Adrenal gland (tissue), 19 donors: ENCODE measurements at regions of chr4 and their contacts with region 1.

Region 1: GRCh38 chr4:39044364-39044955 is 12.3 kb upstream of the TMEM156 start:
- DNase-seq: peak; percentile 92 to 97 (median 96)
- H3K4me3 ChIP-seq: peak overlapping the region in 3 of 4 donors; percentile 51 to 97 (median 71)
- H3K27ac ChIP-seq: peak overlapping the region; percentile 59 to 99 (median 93)
- H3K4me1 ChIP-seq: peaks cover 16 to 43% of the 10 kb centered on the region in 2 donors
- H3K27me3 ChIP-seq: no peaks in the 10 kb centered on the region
- CTCF ChIP-seq: no peak
- POLR2A ChIP-seq: peak in 1 of 2 donors; percentile 9

Region 2: GRCh38 chr4:38914854-38915253 is 129.6 kb before region 1 on chr4:
- intact Hi-C with region 1: loop called in 1 of 2 experiments (anchors 10 kb)
- DNase-seq: no peak
- H3K4me3 ChIP-seq: no peak overlapping the region
- H3K27ac ChIP-seq: peak overlapping the region in 1 of 5 donors; percentile 1
- H3K4me1 ChIP-seq: peaks cover 0 to 15% of the 10 kb centered on the region in 2 donors
- H3K27me3 ChIP-seq: no peaks in the 10 kb centered on the region
- CTCF ChIP-seq: no peak
- POLR2A ChIP-seq: no peak

Region 3: DNA sequence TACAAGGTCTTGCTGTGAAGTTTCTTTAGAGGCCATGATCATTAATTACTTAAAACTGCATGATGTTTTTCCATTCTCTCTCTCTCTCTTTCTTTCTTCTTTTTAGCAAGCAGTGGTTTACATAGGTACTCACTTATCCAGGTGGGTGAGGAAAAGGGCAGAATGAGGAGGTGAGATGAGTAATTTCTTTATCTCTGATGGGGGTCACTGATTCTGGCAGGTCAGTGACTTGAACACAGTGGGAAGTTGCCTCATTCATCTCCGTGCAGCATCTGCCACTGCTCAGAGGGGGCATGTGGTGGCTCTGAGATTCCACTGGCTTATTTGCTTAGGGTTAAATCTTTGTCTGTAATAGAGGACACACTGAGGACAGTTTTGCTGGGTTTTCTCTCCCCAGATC is 114.3 kb before region 1 on chr4:
- intact Hi-C with region 1: no loop called
- DNase-seq: no peak
- H3K4me3 ChIP-seq: no peak overlapping the region
- H3K27ac ChIP-seq: peak overlapping the region in 2 of 5 donors; percentile 2 to 13
- H3K4me1 ChIP-seq: peaks cover 0 to 4% of the 10 kb centered on the region in 2 donors
- H3K27me3 ChIP-seq: no peaks in the 10 kb centered on the region
- CTCF ChIP-seq: no peak
- POLR2A ChIP-seq: no peak